Prostate gland (tissue), 2 donors: ENCODE measurements at regions of chr4 and their contacts with region 1.

Region 1: GRCh38 chr4:39044364-39044955 is 12.3 kb upstream of the TMEM156 start:
- DNase-seq: peak; percentile 82
- H3K4me3 ChIP-seq: peak overlapping the region; percentile 76 to 90
- H3K27ac ChIP-seq: peak overlapping the region; percentile 83 to 93
- H3K4me1 ChIP-seq: no peaks in the 10 kb centered on the region
- H3K27me3 ChIP-seq: no peaks in the 10 kb centered on the region
- CTCF ChIP-seq: no peak
- POLR2A ChIP-seq: peak; percentile 30

Region 2: GRCh38 chr4:38710053-38710452 is 334.4 kb before region 1 on chr4:
- intact Hi-C with region 1: no loop called
- DNase-seq: no peak
- H3K4me3 ChIP-seq: no peak overlapping the region
- H3K27ac ChIP-seq: no peak overlapping the region
- H3K4me1 ChIP-seq: no peaks in the 10 kb centered on the region
- H3K27me3 ChIP-seq: no peaks in the 10 kb centered on the region
- CTCF ChIP-seq: no peak
- POLR2A ChIP-seq: no peak

Region 3: GRCh38 chr4:38943343-38943742 is 101.1 kb before region 1 on chr4:
- intact Hi-C with region 1: loop called (anchors 5 kb)
- DNase-seq: peak; percentile 12
- H3K4me3 ChIP-seq: no peak overlapping the region
- H3K27ac ChIP-seq: peak overlapping the region; percentile 3 to 42
- H3K4me1 ChIP-seq: no peaks in the 10 kb centered on the region
- H3K27me3 ChIP-seq: no peaks in the 10 kb centered on the region
- CTCF ChIP-seq: no peak
- POLR2A ChIP-seq: no peak